Aorta (tissue), 5 donors: ENCODE measurements at regions of chr10 and their contacts with region 1.

Region 1: GRCh38 chr10:35635576-35635975 is 6.5 kb downstream of the FZD8 start:
- DNase-seq: no peak
- ATAC-seq: peak; percentile 77
- H3K4me3 ChIP-seq: no peak overlapping the region
- H3K27ac ChIP-seq: no peak overlapping the region
- H3K4me1 ChIP-seq: no peaks in the 10 kb centered on the region
- H3K27me3 ChIP-seq: no peaks in the 10 kb centered on the region

Region 2: GRCh38 chr10:35523670-35524225 is 111.8 kb before region 1 on chr10:
- intact Hi-C with region 1: no loop called
- DNase-seq: no peak
- ATAC-seq: no peak
- H3K4me3 ChIP-seq: no peak overlapping the region
- H3K27ac ChIP-seq: no peak overlapping the region
- H3K4me1 ChIP-seq: no peaks in the 10 kb centered on the region
- H3K27me3 ChIP-seq: no peaks in the 10 kb centered on the region

Region 3: GRCh38 chr10:35563261-35563891 is 72.2 kb before region 1 on chr10:
- intact Hi-C with region 1: no loop called
- DNase-seq: no peak
- ATAC-seq: peak; percentile 76
- H3K4me3 ChIP-seq: no peak overlapping the region
- H3K27ac ChIP-seq: no peak overlapping the region
- H3K4me1 ChIP-seq: no peaks in the 10 kb centered on the region
- H3K27me3 ChIP-seq: no peaks in the 10 kb centered on the region

Region 4: DNA sequence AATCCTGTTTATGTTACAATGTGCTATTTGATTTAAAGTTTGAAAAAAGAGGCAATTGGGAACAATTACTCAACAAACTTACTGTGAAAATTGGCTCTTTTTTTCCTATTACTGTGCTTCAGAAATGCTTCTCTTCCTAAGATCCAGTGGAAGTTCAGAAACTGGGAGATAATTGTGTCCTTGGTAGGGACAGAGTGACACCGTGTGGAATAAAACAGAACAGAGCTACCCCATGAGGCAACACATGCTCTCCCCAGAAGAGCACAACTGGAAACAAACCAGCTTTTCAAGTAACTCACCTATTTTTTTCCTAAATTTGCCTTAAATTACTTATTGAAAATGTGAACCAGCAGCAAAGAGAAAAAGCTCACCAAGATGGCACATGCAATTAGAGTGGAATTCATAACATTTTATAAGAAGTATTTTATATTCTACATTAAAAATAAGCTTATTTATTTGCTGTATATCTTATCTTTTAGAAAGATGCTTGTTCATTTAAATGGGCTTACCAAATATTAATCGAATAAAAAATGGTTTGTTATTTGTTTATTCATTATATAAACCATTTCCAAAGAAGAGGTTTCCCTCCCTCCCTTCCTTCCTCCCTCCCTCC is 1143.8 kb after region 1 on chr10:
- intact Hi-C with region 1: loop called (anchors 2 kb)
- DNase-seq: no peak
- ATAC-seq: peak; percentile 84
- H3K4me3 ChIP-seq: no peak overlapping the region
- H3K27ac ChIP-seq: no peak overlapping the region
- H3K4me1 ChIP-seq: no peaks in the 10 kb centered on the region
- H3K27me3 ChIP-seq: peaks cover 0 to 1% of the 10 kb centered on the region in 2 donors

Region 5: GRCh38 chr10:36872702-36873393 is 1237.3 kb after region 1 on chr10:
- intact Hi-C with region 1: loop called (anchors 10 kb)
- DNase-seq: no peak
- ATAC-seq: no peak
- H3K4me3 ChIP-seq: no peak overlapping the region
- H3K27ac ChIP-seq: no peak overlapping the region
- H3K4me1 ChIP-seq: no peaks in the 10 kb centered on the region
- H3K27me3 ChIP-seq: no peaks in the 10 kb centered on the region